Ovary (tissue), 10 donors: ENCODE measurements at regions of chr17 and their contacts with region 1.

Region 1: DNA sequence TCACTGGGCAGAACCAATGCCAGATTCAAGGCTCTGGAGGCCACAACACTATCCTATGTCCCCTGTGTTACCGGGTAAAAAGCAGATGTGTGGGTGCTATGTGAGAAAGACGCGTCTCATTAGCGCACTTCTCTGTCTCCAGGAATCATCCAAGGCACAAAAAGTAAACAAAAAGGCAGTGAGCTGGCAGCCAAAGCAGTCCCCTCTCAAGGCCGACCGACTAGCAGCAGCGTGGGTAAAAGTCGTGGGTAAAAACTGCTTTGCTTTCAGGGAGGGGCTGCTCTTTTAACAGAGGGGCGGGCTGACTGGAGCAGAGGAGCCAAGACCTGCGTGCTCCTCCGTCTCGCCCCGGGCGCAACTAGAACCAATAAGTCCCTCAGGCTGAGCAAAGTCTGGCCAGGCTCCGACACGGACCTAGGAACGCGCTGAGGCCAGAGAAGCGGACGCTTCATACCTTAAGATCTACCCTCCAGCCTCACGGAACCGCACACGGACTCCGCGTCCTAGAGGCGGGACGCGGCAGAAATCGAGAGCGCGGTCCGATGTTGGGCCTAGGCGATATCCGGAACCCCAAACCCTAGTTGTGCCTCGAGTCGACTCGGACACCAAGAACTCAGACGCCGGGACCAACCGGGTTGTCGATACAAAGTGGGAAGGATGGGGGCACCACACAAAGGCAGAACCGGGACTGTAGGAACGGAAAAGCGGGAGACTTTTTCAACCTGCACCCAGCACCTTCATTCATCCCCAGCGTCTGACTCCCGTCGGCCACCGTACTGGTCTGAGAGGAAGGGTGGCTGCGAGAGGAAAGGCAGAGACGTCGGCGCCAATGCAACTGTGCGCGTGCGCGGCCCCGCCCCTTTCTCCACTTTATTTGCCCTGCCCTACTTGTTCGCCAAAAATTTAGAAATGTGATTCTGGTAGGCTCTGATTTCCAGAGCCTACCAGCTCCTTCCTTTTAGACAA is at the start of gene INTS2:
- DNase-seq: peak; percentile 94 to 98 (median 97)
- H3K4me3 ChIP-seq: peak within 1 kb of the TSS; percentile 72
- H3K27ac ChIP-seq: peak within 1 kb of the TSS; percentile 79 to 86
- H3K4me1 ChIP-seq: peaks cover 3% of the 10 kb centered on the region
- H3K27me3 ChIP-seq: no peaks in the 10 kb centered on the region
- CTCF ChIP-seq: no peak
- EP300 ChIP-seq: no peak
- POLR2A ChIP-seq: peak; percentile 87
- total RNA-seq, gene INTS2: 5.8 to 11.0 (median 9.1) TPM

Region 2: DNA sequence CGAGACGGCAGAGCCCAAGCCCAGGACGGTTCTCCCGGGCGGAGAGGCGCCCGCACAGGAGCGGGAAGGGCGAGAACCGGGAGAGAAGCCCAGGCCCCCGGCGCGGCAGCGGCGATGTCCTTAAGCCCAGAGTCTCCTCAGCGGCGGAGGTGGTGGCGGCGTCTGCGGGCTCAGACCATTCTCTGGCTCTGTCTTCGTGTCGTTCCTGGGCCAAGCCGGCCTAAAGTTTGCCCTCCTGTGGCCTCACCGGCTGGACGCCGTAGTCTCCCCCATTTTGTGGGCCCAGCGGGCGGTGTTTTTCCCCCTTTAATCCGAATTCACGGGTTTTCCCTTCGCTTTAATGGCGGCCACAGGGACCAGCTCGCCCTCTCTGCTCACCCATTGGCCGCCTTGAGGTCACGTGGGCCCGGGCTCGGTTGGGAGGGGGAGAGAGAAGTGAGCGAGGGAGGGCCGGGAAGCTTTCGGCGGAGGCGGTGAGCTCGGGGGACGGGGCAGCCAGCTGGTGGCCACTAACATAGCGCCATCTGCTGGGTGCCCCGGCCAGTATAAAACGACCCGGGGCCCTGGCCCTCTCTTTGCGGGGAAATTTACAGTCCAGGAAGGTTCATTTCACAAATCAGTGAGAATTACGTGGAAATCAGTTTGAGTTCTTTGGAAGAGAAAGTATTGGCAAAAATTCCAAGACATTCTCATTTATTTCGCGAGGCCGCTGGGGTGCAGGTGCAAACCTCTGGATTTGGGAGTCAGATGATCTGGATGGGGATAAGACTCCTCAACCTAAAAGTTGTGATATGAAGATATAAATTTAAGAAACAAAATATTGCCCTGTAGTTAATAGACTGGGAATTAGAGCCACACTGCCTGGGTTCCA is 138.3 kb after region 1 on chr17:
- intact Hi-C with region 1: loop called in 1 of 4 experiments (anchors 5 kb)
- DNase-seq: peak; percentile 97 to 99 (median 98)
- H3K4me3 ChIP-seq: peak overlapping the region; percentile 98
- H3K27ac ChIP-seq: peak overlapping the region; percentile 86 to 98
- H3K4me1 ChIP-seq: peaks cover 1% of the 10 kb centered on the region
- H3K27me3 ChIP-seq: no peaks in the 10 kb centered on the region
- CTCF ChIP-seq: peak; percentile 88 to 93 (median 90)
- EP300 ChIP-seq: no peak
- POLR2A ChIP-seq: peak; percentile 79